ENCODE measurements at regions of chr16 and their contacts with region 1.

Region 1: GRCh38 chr16:3099732-3100499 is 822 bp upstream of the ZSCAN10 start:
- DNase-seq: peak; percentile 83
- H3K4me3 ChIP-seq: peak overlapping the region in 1 of 3 experiments; percentile 19
- H3K27ac ChIP-seq: no peak overlapping the region
- H3K4me1 ChIP-seq: peaks cover 4% of the 10 kb centered on the region
- H3K27me3 ChIP-seq: no peaks in the 10 kb centered on the region
- CTCF ChIP-seq: no peak

Region 2: GRCh38 chr16:3045357-3045728 is 54.6 kb before region 1 on chr16:
- CTCF ChIA-PET with region 1: no interaction called
- dilution Hi-C with region 1: loop called (anchors 5 kb)
- in situ Hi-C with region 1: no loop called
- intact Hi-C with region 1: no loop called
- DNase-seq: no peak
- H3K4me3 ChIP-seq: peak overlapping the region in 2 of 3 experiments; percentile 44 to 53
- H3K27ac ChIP-seq: no peak overlapping the region
- H3K4me1 ChIP-seq: peaks cover 11% of the 10 kb centered on the region
- H3K27me3 ChIP-seq: peaks cover 2% of the 10 kb centered on the region
- CTCF ChIP-seq: no peak

Region 3: GRCh38 chr16:3134564-3135417 is 34.9 kb after region 1 on chr16 and contains the start of gene ZNF213:
- CTCF ChIA-PET with region 1: no interaction called
- dilution Hi-C with region 1: no loop called
- in situ Hi-C with region 1: no loop called
- intact Hi-C with region 1: loop called (anchors 1 kb)
- DNase-seq: peak; percentile 98
- H3K4me3 ChIP-seq: peak within 1 kb of the TSS; percentile 93 to 100 (median 97)
- H3K27ac ChIP-seq: peak within 1 kb of the TSS; percentile 80
- H3K4me1 ChIP-seq: peaks cover 7% of the 10 kb centered on the region
- H3K27me3 ChIP-seq: no peaks in the 10 kb centered on the region
- CTCF ChIP-seq: no peak
- total RNA-seq, gene ZNF213: 7.7 to 10.8 TPM

Region 4: DNA sequence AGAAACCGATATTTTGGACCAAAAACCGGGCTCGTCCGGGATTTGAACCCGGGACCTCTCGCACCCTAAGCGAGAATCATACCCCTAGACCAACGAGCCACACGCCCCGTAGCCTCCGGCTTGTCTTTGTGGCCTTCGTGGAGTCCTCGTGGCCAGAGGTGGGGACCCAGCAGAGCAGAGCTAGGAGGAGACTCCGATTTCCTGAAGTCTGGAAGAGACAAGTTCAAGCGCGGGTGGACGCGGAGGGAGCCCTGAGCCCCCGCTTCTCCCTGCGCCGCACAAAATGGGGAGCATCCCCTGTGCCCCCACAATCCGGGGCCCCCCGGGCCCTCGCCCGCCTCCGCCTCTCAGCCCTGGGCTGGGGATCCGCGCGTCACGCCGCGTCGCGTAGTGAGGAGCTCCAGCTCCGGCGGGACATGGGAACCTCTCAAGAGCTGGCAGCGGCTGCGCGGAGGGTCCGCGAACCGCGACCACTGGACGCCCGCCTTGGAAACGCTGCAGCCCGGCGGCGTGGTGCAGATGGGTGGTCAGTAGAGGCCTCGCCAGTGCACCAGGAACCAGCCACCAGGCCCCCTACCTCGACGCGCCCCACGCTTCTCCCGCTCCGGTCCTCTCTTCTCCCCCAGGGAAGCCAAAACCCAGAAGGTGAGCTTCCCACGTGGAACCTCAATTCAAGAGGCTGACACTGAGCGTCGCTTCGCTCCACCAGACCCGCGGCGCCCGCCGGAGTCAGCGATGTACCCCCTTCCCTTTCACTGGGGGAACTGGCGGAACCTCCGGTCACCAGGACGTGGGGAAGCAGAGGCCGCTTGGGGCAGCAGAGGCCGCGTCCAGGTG is 82.9 kb after region 1 on chr16:
- CTCF ChIA-PET with region 1: interaction called, 11 read pairs
- dilution Hi-C with region 1: no loop called
- in situ Hi-C with region 1: no loop called
- intact Hi-C with region 1: no loop called
- DNase-seq: peak; percentile 77
- H3K4me3 ChIP-seq: peak overlapping the region; percentile 63 to 75 (median 65)
- H3K27ac ChIP-seq: peak overlapping the region; percentile 18
- H3K4me1 ChIP-seq: no peaks in the 10 kb centered on the region
- H3K27me3 ChIP-seq: no peaks in the 10 kb centered on the region
- CTCF ChIP-seq: peak; percentile 45 to 64

Measured in mammary epithelial cell (primary cell).